ENCODE measurements at regions of chr22 and their contacts with region 1.

Region 1: DNA sequence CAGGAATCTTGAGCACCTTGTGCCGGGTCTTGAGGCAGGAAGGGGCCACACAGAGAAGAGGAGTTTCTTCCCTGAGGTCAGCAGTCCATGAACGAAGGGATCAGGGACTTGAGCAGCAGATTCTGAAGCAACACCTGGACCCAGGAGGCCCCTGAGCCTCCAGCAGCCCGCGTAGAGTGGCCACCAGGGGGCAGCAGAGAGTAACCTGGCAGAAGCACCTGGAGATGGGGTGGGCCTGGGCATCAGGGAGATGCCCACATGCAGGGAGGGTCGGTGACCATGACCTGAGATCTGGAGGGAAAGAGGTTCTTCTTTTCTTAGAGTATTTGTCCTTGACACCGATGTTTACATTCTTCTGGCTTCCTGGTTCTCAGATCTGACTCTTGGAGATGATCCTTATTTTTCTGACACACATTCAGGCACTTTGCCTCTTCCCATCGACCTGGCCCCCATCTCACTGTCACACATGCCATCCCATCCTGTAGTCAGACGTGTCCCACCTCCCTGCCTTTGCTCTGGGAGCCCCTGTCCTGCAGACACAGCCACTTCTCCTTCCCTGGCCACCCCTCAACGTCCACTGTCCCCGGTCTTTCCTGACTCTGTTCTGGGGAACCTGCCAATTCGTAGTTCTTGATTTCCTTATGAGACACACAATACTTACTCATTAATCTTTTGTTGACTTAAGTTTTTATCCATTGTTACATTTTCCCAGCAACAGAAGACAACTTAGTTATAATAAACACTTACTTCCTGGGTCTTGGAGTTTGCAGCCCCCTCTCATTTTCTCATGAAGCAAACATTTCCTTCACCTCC is 66.5 kb downstream of the GGTLC2 start:
- DNase-seq: no peak
- H3K4me3 ChIP-seq: no peak overlapping the region
- H3K27me3 ChIP-seq: no peaks in the 10 kb centered on the region; the same call in 1 of the 2 replicates
- CTCF ChIP-seq: peak; percentile 98

Region 2: DNA sequence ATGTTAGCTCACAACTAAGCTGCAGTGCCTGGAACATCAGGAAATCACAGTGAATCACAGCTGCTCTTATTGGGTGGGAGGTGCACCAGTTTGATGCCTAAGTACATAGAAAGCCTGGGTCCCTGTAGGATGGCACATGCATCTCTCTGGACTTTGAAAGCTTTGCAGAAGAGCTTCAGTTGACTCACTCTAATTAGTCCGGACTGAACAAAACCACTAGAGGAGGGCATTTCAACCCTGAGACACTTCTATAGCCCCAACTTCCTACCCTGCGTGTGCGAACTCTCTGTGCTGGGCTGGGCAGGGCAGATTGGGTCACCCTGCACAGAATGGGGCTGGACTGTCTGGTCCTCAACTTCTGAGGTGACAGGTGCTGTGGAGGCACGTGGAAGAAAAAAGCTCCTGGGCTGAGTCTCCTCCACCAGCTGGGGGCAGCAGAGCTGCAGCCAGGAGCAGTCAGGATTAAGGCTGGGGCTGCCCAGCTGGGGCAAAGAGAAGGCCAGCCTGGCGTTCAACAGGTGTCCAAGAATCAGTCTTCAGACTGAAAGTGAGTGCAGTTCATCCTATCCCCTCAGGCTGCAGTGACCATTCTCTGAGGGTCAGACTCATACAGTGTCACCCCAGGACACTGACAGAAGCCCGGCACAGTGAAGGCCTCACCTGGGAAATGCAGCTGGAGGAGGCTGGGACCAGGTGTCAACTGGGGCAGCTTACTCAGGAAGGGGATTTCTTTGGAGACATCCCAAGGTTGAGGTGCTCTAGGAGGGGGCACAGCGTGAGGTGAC is 44.4 kb before region 1 on chr22:
- CTCF ChIA-PET with region 1: interaction called, 17 read pairs
- POLR2A ChIA-PET with region 1: no interaction called
- DNase-seq: no peak
- H3K4me3 ChIP-seq: no peak overlapping the region
- H3K27me3 ChIP-seq: no peaks in the 10 kb centered on the region; the same call in 1 of the 2 replicates
- CTCF ChIP-seq: peak; percentile 72

Region 3: GRCh38 chr22:22692707-22693530 is 18.0 kb before region 1 on chr22:
- CTCF ChIA-PET with region 1: interaction called, 11 read pairs
- POLR2A ChIA-PET with region 1: no interaction called
- DNase-seq: no peak
- H3K4me3 ChIP-seq: no peak overlapping the region
- H3K27me3 ChIP-seq: no peaks in the 10 kb centered on the region
- CTCF ChIP-seq: peak; percentile 44

Region 4: GRCh38 chr22:22748297-22748743 is 37.4 kb after region 1 on chr22:
- CTCF ChIA-PET with region 1: interaction called, 29 read pairs
- POLR2A ChIA-PET with region 1: no interaction called
- DNase-seq: no peak
- H3K4me3 ChIP-seq: no peak overlapping the region
- H3K27me3 ChIP-seq: no peaks in the 10 kb centered on the region
- CTCF ChIP-seq: peak; percentile 86

Region 5: DNA sequence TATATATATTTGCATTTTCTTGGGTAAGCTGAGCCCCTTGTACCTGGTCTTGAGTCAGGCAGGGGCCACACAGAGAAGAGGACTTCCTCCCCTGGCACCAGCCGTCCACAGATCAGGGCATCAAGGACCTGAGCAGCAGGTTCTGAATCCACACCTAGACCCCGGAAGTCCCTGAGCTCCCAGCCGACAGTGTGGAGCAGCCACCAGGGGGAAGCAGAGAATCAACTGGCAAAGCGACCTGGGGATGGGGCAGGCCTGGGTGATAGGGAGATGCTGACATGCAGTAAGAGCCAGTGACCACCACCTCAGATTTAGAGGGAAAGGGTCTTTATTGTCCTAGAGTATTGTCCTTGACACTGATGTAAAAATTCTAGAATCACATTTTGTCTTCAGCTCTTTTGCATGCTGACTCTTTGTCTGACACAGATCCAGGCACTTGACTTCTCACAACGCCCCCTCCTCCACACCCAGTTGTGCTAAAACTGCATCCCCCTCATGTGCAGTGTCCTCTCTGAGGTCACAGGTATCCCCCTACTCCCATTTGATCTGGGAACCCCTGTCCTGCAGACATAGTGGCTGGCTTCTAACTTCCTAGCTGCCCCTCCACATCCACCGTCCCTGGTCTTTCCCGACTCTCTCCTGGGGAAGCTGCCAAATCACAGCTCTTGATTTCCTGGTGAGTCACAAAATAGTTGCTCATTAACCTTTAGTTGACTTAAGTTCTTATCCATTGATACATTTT is 42.8 kb after region 1 on chr22:
- CTCF ChIA-PET with region 1: interaction called, 10 read pairs
- POLR2A ChIA-PET with region 1: no interaction called
- DNase-seq: no peak
- H3K4me3 ChIP-seq: no peak overlapping the region
- H3K27me3 ChIP-seq: no peaks in the 10 kb centered on the region
- CTCF ChIP-seq: peak; percentile 69